Posterior vena cava (tissue), 2 donors: ENCODE measurements at regions of chr16 and their contacts with region 1.

Region 1: GRCh38 chr16:4852207-4852872 is 5.1 kb downstream of the UBN1 start:
- DNase-seq: no peak

Region 2: DNA sequence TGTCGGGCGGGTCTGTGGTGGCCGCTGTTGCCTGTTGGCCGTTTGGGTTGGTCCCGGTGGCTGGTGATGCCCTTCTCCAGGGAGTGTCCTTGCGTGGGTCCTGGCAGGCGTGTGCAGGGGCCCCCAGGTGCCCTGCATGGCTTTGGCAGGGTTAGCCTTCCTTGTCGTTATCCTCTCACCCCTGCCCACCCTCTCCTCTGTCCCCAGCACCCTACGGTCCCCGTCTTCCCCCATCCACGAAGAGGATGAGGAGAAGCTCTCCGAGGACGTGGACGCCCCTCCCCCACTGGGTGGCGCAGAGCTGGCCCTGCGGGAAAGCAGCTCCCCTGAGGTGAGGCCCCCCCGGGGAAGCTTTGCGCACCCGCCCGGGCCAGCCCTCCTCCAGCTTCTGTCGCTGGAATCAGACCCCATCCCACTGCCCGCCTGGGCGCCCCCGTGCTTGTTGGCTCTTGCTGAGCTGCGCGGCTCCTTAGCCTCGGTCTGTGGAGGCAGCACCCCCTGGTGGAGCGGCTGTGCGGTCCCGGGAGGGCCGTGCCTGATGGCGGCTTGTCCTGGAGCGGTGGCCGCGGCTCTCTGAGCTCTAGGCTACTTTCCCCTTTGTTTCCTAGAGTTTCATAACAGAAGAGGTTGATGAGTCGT is 169.6 kb before region 1 on chr16:
- intact Hi-C with region 1: no loop called
- DNase-seq: peak; percentile 79

Region 3: DNA sequence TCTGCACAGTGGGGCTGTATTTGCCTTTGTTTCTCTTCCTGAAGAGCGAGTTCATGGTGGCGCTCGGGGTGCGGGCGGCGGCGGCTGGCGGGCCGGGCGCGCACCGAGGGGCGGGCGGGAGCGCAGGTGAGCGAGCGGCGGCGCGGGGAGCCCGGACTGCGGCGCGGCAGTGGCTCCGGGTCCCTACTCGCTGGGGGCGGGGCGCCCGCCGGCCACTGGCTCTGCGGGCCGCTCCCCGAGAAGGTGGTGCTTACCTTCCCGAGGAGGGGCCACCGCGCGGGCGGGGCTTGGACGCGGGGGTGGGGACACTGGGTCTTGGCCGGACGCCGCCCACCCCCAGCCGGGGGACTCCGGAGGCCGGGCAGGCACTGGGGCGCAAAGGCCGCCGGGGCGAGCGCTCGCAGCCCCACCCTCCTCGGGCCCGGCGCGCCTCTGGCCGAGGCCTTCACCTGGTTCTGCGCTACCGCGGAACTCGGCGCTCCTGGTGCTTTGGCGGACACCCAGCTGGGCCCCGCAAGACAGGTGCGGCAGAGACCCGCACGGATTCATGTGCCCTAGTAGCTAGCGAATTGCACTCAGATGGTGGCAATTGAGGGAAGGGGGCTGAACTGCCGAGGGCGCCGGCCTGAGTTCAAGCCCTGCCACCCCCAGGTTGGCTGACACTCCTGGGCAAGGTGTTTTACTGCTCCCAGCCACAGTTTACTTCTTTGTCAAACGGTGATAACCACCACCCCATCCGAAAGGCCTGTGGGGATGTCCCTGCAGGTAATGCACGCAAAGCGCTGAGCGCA is 84.8 kb after region 1 on chr16 and contains the start of gene PPL:
- intact Hi-C with region 1: loop called (anchors 5 to 10 kb)
- DNase-seq: no peak
- total RNA-seq, gene PPL: 23.8 to 24.1 TPM